ENCODE measurements at regions of chr5 and their contacts with region 1.

Region 1: DNA sequence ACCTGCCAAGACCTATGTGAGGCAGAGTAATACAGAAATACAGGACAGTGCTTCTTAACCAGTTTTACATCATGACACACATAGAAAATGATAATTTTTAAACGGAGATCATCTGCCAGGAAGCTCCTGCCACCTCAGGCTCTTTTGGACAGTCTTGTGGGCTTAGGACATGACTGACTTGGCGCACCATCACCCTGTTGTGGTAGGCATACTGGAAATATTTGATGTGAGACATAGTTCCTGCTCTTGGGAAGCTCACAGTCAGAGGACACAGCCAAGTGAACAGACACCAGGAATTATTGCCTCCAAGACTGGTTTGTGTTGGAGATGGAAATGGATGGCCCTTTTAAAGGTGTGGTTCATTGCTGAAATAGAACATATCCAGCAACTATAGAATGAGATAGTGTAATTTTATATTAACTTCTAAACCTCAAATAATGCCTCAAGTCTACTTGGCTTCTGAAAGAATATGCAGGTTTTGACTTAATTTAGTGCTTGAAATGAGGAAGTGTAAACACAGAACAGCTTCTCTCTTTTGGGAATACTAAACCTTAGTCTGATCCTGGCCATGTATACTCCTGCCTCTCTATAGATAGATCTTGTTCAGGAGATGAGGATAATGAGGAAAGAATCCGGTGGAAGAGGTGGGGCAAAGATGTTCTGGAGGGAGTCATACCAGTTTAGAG is 19.7 kb downstream of the CPEB4 start:
- DNase-seq: no peak
- H3K4me3 ChIP-seq: no peak overlapping the region
- H3K4me3 Mint-ChIP-seq: no peak overlapping the region
- H3K27ac ChIP-seq: no peak overlapping the region
- H3K27ac Mint-ChIP-seq: peak overlapping the region in 2 of 7 donors; percentile 24 to 41
- H3K4me1 ChIP-seq: peaks cover 18% of the 10 kb centered on the region
- H3K4me1 Mint-ChIP-seq: peaks cover 18 to 42% (median 31%) of the 10 kb centered on the region in 4 donors
- H3K27me3 ChIP-seq: no peaks in the 10 kb centered on the region
- H3K27me3 Mint-ChIP-seq: no peaks in the 10 kb centered on the region

Region 2: GRCh38 chr5:173895401-173896165 is 12.2 kb before region 1 on chr5:
- CTCF ChIA-PET with region 1: interaction called, 3 read pairs
- POLR2A ChIA-PET with region 1: interaction called, 5 read pairs
- intact Hi-C with region 1: loop called (anchors 2 kb)
- DNase-seq: no peak
- H3K4me3 ChIP-seq: no peak overlapping the region
- H3K4me3 Mint-ChIP-seq: peak overlapping the region in 1 of 8 donors; percentile 44
- H3K27ac ChIP-seq: no peak overlapping the region
- H3K27ac Mint-ChIP-seq: no peak overlapping the region
- H3K4me1 ChIP-seq: peaks cover 43% of the 10 kb centered on the region
- H3K4me1 Mint-ChIP-seq: peaks cover 33 to 61% (median 38%) of the 10 kb centered on the region in 4 donors
- H3K27me3 ChIP-seq: no peaks in the 10 kb centered on the region
- H3K27me3 Mint-ChIP-seq: no peaks in the 10 kb centered on the region

Measured in CD4-positive, alpha-beta memory T cell (primary cell).